ENCODE measurements at regions of chr2 and their contacts with region 1.

Region 1: GRCh38 chr2:73268830-73269685 is 15.2 kb downstream of the FBXO41 start:
- DNase-seq: peak; percentile 77 to 82 (median 80)
- H3K4me3 ChIP-seq: peak overlapping the region in 1 of 2 donors; percentile 45
- H3K4me3 Mint-ChIP-seq: peak overlapping the region in 7 of 8 donors; percentile 25 to 70 (median 67)
- H3K27ac ChIP-seq: peak overlapping the region; percentile 46
- H3K27ac Mint-ChIP-seq: no peak overlapping the region
- H3K4me1 ChIP-seq: peaks cover 24% of the 10 kb centered on the region
- H3K4me1 Mint-ChIP-seq: peaks cover 18 to 27% (median 23%) of the 10 kb centered on the region in 4 donors
- H3K27me3 ChIP-seq: no peaks in the 10 kb centered on the region
- H3K27me3 Mint-ChIP-seq: no peaks in the 10 kb centered on the region

Region 2: GRCh38 chr2:73284296-73285158 is 15.5 kb after region 1 on chr2 and contains the start of gene FBXO41:
- CTCF ChIA-PET with region 1: interaction called, 11 read pairs
- POLR2A ChIA-PET with region 1: interaction called, 7 read pairs
- intact Hi-C with region 1: loop called (anchors 2 kb)
- DNase-seq: peak; percentile 40 to 62 (median 50)
- H3K4me3 ChIP-seq: peak within 1 kb of the TSS; percentile 32 to 62
- H3K4me3 Mint-ChIP-seq: peak within 1 kb of the TSS; percentile 79 to 89 (median 85)
- H3K27ac ChIP-seq: peak within 1 kb of the TSS; percentile 27
- H3K27ac Mint-ChIP-seq: peak within 1 kb of the TSS in 6 of 7 donors; percentile 16 to 70 (median 57)
- H3K4me1 ChIP-seq: peaks cover 19% of the 10 kb centered on the region
- H3K4me1 Mint-ChIP-seq: peaks cover 7 to 25% (median 16%) of the 10 kb centered on the region in 4 donors
- H3K27me3 ChIP-seq: no peaks in the 10 kb centered on the region
- H3K27me3 Mint-ChIP-seq: peaks cover 4 to 11% of the 10 kb centered on the region in 2 donors
- total RNA-seq, gene FBXO41: 9.8 to 11.4 TPM

Region 3: GRCh38 chr2:73314441-73314840 is 45.4 kb after region 1 on chr2:
- CTCF ChIA-PET with region 1: no interaction called
- POLR2A ChIA-PET with region 1: no interaction called
- intact Hi-C with region 1: no loop called
- DNase-seq: no peak
- H3K4me3 ChIP-seq: no peak overlapping the region
- H3K4me3 Mint-ChIP-seq: no peak overlapping the region
- H3K27ac ChIP-seq: no peak overlapping the region
- H3K27ac Mint-ChIP-seq: no peak overlapping the region
- H3K4me1 ChIP-seq: no peaks in the 10 kb centered on the region
- H3K4me1 Mint-ChIP-seq: no peaks in the 10 kb centered on the region
- H3K27me3 ChIP-seq: no peaks in the 10 kb centered on the region
- H3K27me3 Mint-ChIP-seq: peaks cover 22 to 28% of the 10 kb centered on the region in 2 donors

Region 4: DNA sequence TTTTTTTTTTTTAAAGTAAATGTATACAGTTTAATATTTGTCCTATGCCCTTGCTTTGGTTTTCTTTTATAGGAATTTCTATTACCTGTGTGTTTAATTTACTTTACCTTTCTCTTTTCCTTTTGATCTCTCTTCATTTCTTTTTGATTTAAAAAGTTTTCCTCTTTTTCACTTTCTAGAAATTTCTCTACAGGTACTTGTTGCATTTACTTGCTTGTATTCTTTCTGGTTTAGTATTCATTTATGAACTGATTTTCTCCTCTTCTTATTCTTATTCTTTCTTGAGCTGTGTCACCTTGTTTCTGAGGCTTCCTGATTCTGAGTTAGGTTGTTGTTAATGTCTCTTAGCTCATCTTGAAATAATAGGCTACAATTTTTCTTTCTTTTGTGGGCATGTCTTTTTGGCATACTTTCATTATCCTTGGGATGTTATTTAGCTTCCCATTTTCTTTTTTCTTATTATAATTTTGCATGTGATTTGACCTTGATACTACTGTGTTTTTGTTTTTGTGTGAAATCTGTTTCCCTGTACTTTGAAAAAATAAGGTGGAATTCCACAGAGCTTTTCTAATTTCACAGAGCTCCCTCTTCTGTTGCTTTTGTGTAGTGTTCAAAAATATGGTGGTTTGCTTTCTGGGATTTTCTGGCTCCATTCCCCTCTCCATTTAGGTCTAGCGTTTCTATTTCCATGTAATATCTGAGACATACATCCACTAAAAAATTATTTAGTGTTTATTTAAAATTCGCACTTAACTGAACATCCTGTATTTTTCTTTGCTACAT is 91.0 kb after region 1 on chr2:
- CTCF ChIA-PET with region 1: no interaction called
- POLR2A ChIA-PET with region 1: no interaction called
- intact Hi-C with region 1: no loop called
- DNase-seq: no peak
- H3K4me3 ChIP-seq: no peak overlapping the region
- H3K4me3 Mint-ChIP-seq: no peak overlapping the region
- H3K27ac ChIP-seq: no peak overlapping the region
- H3K27ac Mint-ChIP-seq: no peak overlapping the region
- H3K4me1 ChIP-seq: no peaks in the 10 kb centered on the region
- H3K4me1 Mint-ChIP-seq: peaks cover 0 to 2% (median 0%) of the 10 kb centered on the region in 4 donors
- H3K27me3 ChIP-seq: no peaks in the 10 kb centered on the region
- H3K27me3 Mint-ChIP-seq: peaks cover 7 to 16% of the 10 kb centered on the region in 2 donors

Measured in CD4-positive, alpha-beta memory T cell (primary cell).